HEK293T (cell line): ENCODE measurements at regions of chr17 and their contacts with region 1.

Region 1: GRCh38 chr17:51120739-51121617 is at the start of gene SPAG9:
- DNase-seq: peak; percentile 98

Region 2: GRCh38 chr17:51147650-51148049 is 26.7 kb after region 1 on chr17:
- CTCF ChIA-PET with region 1: interaction called, 8 read pairs
- POLR2A ChIA-PET with region 1: interaction called, 60 read pairs
- DNase-seq: no peak

Region 3: GRCh38 chr17:51153210-51154072 is 32.5 kb after region 1 on chr17 and contains the start of gene NME1:
- CTCF ChIA-PET with region 1: interaction called, 8 read pairs
- POLR2A ChIA-PET with region 1: interaction called, 60 read pairs
- DNase-seq: peak; percentile 94